Vagina (tissue), 2 donors: ENCODE measurements at regions of chr4 and their contacts with region 1.

Region 1: DNA sequence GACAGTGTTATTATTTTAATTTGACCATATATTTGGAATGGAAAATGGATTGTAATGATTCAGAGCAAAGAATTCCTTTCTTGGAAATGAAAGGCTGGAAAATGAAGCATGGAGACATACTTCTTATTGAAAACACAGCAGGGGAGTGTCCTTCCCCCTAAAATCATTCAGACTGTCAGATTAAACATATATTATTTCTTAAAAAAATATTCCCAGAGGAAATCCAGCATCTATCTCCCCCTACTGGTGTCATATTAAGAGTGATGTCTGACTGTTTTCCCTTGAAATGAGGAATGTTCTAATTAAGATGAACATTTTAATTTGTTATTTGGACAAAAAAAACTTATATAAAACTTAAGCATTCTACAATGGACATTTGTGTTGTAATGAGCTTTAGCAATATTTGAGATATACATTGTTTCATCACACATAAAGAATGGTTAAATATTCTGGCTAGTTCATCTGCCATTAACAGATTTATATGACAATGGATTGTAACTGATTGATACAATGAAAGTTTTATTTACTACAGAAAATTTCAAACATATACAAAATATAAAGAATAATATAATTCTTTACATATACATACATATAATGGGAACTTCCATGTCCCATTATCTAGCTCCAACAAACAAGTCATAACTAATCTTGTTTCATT is 264.6 kb downstream of the SPRY1 start:
- DNase-seq: no peak
- H3K4me3 ChIP-seq: no peak overlapping the region
- H3K27ac ChIP-seq: no peak overlapping the region
- H3K4me1 ChIP-seq: no peaks in the 10 kb centered on the region
- H3K27me3 ChIP-seq: no peaks in the 10 kb centered on the region
- CTCF ChIP-seq: peak in 2 of 3 experiments; percentile 47 to 58
- POLR2A ChIP-seq: no peak

Region 2: GRCh38 chr4:123396307-123397143 is 264.7 kb before region 1 on chr4 and contains the start of gene SPRY1:
- intact Hi-C with region 1: loop called (anchors 10 kb)
- DNase-seq: peak in 1 of 2 donors; percentile 96
- H3K4me3 ChIP-seq: peak within 1 kb of the TSS; percentile 84 to 89
- H3K27ac ChIP-seq: peak within 1 kb of the TSS; percentile 97
- H3K4me1 ChIP-seq: peaks cover 11% of the 10 kb centered on the region
- H3K27me3 ChIP-seq: no peaks in the 10 kb centered on the region
- CTCF ChIP-seq: no peak
- POLR2A ChIP-seq: peak in 1 of 2 donors; percentile 73
- total RNA-seq, gene SPRY1: 185 TPM